Naive thymus-derived CD4-positive, alpha-beta T cell (primary cell): ENCODE measurements at regions of chr7 and their contacts with region 1.

Region 1: GRCh38 chr7:36670585-36671431 is 53.5 kb downstream of the AOAH start:
- DNase-seq: peak; percentile 37 to 80 (median 74)
- ATAC-seq: peak; percentile 98
- H3K4me3 ChIP-seq: no peak overlapping the region
- H3K4me3 Mint-ChIP-seq: peak overlapping the region in 7 of 10 donors; percentile 13 to 84 (median 54)
- H3K27ac ChIP-seq: no peak overlapping the region
- H3K27ac Mint-ChIP-seq: peak overlapping the region in 7 of 9 donors; percentile 19 to 92 (median 64)
- H3K4me1 ChIP-seq: peaks cover 0 to 7% of the 10 kb centered on the region in 2 donors
- H3K4me1 Mint-ChIP-seq: peaks cover 17 to 44% (median 37%) of the 10 kb centered on the region in 7 donors
- H3K27me3 ChIP-seq: no peaks in the 10 kb centered on the region
- H3K27me3 Mint-ChIP-seq: no peaks in the 10 kb centered on the region

Region 2: DNA sequence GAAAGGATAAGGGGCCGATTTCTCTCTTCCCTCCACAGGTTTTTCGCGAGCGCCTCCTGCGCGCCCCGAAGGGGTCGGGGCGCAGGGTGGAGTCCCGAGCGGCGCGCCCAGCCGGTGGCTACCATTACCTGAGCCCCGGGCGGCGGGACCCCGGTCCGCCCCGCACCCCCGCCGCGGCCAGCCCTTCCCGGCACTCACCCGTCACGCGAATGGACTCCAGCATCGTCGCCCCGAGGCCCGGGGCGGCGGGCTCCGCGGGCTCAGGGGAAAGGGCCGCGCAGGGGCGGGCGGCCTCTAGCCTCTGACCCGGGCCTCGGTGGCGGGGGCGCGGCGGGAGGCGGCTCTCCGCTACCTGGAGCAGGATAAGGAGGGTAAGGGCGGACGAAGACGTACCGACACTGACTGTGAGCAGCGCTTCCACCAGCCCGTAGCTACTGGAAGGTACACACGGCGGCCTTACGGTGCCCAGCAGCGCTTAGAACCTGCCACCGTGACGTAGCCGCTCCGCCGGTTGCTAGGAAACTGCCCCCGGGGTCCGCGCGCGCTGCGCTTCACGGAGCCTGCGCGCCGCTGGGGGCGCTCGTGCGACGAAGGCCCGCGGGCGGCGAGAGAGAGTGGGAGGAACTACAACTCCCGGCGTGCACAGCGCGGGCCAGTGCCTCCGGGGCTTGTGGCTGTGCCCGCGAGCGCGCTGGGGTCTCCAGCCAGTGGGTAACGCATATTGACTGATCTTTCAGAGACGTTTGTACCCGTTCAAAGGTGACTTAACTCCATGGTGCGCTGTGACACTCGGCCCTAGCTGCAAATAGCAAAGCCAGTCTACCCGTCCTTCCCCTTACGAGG is 303.9 kb before region 1 on chr7:
- CTCF ChIA-PET with region 1: interaction called, 10 read pairs
- POLR2A ChIA-PET with region 1: no interaction called
- intact Hi-C with region 1: loop called in 1 of 2 experiments (anchors 1 kb)
- DNase-seq: peak; percentile 84 to 92 (median 91)
- ATAC-seq: peak; percentile 98
- H3K4me3 ChIP-seq: peak overlapping the region; percentile 76
- H3K4me3 Mint-ChIP-seq: peak overlapping the region; percentile 80 to 97 (median 93)
- H3K27ac ChIP-seq: peak overlapping the region; percentile 70
- H3K27ac Mint-ChIP-seq: peak overlapping the region in 8 of 9 donors; percentile 51 to 94 (median 82)
- H3K4me1 ChIP-seq: peaks cover 0 to 5% of the 10 kb centered on the region in 2 donors
- H3K4me1 Mint-ChIP-seq: peaks cover 0 to 8% (median 5%) of the 10 kb centered on the region in 7 donors
- H3K27me3 ChIP-seq: no peaks in the 10 kb centered on the region
- H3K27me3 Mint-ChIP-seq: peaks cover 0 to 57% (median 0%) of the 10 kb centered on the region in 5 donors

Region 3: GRCh38 chr7:36570528-36571189 is 100.1 kb before region 1 on chr7:
- CTCF ChIA-PET with region 1: interaction called, 3 read pairs
- POLR2A ChIA-PET with region 1: no interaction called
- intact Hi-C with region 1: loop called in 1 of 2 experiments (anchors 2 kb)
- DNase-seq: peak in 3 of 9 donors; percentile 6 to 14 (median 7)
- ATAC-seq: peak; percentile 24
- H3K4me3 ChIP-seq: no peak overlapping the region
- H3K4me3 Mint-ChIP-seq: peak overlapping the region in 5 of 10 donors; percentile 1 to 58 (median 39)
- H3K27ac ChIP-seq: no peak overlapping the region
- H3K27ac Mint-ChIP-seq: peak overlapping the region in 4 of 9 donors; percentile 18 to 79 (median 44)
- H3K4me1 ChIP-seq: peaks cover 5 to 10% of the 10 kb centered on the region in 2 donors
- H3K4me1 Mint-ChIP-seq: peaks cover 6 to 27% (median 17%) of the 10 kb centered on the region in 7 donors
- H3K27me3 ChIP-seq: no peaks in the 10 kb centered on the region
- H3K27me3 Mint-ChIP-seq: no peaks in the 10 kb centered on the region

Region 4: GRCh38 chr7:36625247-36625646 is 45.6 kb before region 1 on chr7:
- CTCF ChIA-PET with region 1: no interaction called
- POLR2A ChIA-PET with region 1: no interaction called
- intact Hi-C with region 1: loop called in 1 of 2 experiments (anchors 5 kb)
- DNase-seq: no peak
- ATAC-seq: no peak
- H3K4me3 ChIP-seq: no peak overlapping the region
- H3K4me3 Mint-ChIP-seq: peak overlapping the region in 1 of 10 donors; percentile 0
- H3K27ac ChIP-seq: no peak overlapping the region
- H3K27ac Mint-ChIP-seq: peak overlapping the region in 3 of 9 donors; percentile 8 to 84 (median 69)
- H3K4me1 ChIP-seq: peaks cover 0 to 6% of the 10 kb centered on the region in 2 donors
- H3K4me1 Mint-ChIP-seq: peaks cover 21 to 57% (median 40%) of the 10 kb centered on the region in 7 donors
- H3K27me3 ChIP-seq: no peaks in the 10 kb centered on the region
- H3K27me3 Mint-ChIP-seq: no peaks in the 10 kb centered on the region

Region 5: DNA sequence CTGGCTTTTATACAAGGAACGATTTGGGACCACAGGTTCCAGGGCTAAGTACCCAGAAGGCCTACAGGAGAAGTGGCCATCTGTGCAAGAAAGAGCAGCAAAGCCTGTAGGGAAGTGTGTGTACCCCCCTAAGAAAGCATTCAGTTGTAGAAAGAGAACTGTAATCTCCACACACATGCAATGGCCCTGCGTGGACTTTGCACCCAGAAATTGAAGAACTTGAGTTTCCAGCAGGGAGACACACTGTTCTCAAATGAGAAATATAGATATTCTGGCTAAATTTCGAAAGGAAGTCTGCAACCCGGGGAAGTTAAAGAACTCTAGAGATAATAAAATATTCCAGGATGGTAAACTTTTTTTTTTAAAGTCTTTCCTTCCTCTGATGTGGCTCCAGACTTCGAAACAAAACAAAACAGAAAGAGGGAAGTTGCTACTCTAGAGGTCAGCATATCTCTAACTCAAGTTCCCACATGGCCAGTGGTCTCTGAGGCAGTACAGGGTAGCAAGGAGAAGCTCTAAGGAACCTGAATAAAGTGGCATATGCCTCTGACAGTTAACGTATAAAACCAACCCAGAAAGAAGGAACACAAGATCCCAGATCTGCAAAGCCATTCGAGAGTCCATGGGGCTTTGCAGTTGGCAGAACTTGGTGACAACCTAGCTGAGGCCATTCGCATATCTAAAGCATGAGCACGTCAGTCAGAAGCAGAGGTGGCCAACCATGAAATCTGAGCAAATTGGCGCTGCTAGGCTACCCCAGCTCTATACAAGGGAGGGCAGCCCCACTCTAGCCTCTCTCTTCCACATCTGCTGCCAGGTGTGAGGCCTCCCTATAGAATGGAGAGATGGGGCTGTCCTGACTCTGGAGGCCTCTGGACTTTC is 721.2 kb after region 1 on chr7:
- CTCF ChIA-PET with region 1: no interaction called
- POLR2A ChIA-PET with region 1: no interaction called
- intact Hi-C with region 1: no loop called
- DNase-seq: no peak
- ATAC-seq: peak; percentile 67
- H3K4me3 ChIP-seq: no peak overlapping the region
- H3K4me3 Mint-ChIP-seq: peak overlapping the region in 3 of 10 donors; percentile 29 to 56 (median 47)
- H3K27ac ChIP-seq: no peak overlapping the region
- H3K27ac Mint-ChIP-seq: peak overlapping the region in 5 of 9 donors; percentile 32 to 90 (median 73)
- H3K4me1 ChIP-seq: peaks cover 0 to 21% of the 10 kb centered on the region in 2 donors
- H3K4me1 Mint-ChIP-seq: peaks cover 43 to 79% (median 61%) of the 10 kb centered on the region in 7 donors
- H3K27me3 ChIP-seq: no peaks in the 10 kb centered on the region
- H3K27me3 Mint-ChIP-seq: no peaks in the 10 kb centered on the region